GM13977 (cell line): ENCODE measurements at regions of chr2 and their contacts with region 1.

Region 1: DNA sequence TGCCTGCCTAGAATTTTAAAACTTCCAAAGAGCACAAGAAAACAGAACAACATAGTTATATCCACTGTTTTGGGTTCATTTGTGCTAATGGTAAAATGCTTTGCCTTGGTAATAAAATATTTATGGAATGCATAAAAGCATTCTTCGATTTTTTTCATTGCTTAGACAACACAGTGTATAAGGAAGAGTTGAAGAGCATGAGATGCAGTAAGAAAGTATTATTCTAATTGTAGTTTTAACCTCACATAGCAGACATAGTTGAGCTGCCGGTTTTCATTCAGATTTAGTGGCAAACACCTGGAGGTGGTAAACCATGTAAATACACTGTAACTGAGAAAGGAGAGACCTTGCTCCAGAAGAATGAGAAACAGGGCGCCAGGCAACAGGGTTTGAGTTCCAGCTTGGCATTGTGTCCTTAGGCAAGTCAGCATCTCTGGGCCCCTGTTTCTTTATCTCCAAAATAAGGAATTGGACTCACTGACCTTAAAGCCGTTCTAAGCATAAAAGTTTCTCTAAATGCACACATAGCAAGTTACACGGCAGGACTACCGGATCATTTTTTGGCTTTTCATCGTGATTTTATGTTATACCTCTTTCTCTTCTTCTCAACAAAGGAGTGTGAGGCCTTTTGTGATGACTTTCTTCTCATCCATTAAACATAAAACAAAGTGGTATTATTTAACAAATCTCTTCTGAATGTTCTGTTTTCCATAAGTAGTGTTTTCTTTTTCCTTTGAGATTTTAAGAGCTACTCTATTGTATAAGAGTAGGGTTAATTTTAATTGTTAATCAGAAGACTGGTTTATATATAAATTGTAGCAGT is 7.9 kb downstream of the UGP2 start:
- DNase-seq: no peak
- CTCF ChIP-seq: no peak

Region 2: GRCh38 chr2:63698825-63699548 is 150.6 kb before region 1 on chr2:
- in situ Hi-C with region 1: loop called (anchors 10 kb)
- DNase-seq: peak; percentile 50
- CTCF ChIP-seq: peak; percentile 66